ENCODE measurements at regions of chr10 and their contacts with region 1.

Region 1: DNA sequence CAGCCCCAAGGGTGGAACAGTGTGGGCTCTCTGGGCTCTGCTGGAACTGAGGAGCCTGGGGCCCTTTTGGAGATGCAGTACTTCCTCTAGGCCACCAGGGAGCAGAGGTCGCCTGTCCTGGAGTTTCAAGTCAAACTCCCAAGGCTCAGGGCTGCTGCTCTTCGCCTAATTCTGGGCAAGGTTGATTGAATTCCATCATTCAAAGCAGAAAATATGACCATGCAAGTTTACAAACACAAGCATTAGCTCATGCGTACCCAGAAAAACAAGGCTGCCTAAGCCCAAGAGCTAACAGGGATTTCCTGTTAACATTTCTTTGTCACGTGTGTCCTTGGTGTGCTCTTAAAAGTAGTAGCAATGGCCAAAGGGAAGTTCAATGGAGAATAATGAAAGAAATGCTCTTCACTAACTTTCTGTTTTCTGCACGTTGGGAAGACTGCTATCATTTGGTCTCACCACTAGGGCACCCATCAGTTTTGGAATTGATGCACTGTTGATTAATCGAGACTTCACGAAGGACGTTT is 20.1 kb downstream of the LDB3 start:
- DNase-seq: peak; percentile 50
- H3K4me3 ChIP-seq: no peak overlapping the region
- H3K27ac ChIP-seq: no peak overlapping the region
- H3K4me1 ChIP-seq: no peaks in the 10 kb centered on the region
- H3K27me3 ChIP-seq: no peaks in the 10 kb centered on the region
- CTCF ChIP-seq: peak; percentile 69 to 92

Region 2: GRCh38 chr10:86592413-86592812 is 96.0 kb before region 1 on chr10:
- CTCF ChIA-PET with region 1: no interaction called
- dilution Hi-C with region 1: loop called (anchors 5 kb)
- in situ Hi-C with region 1: no loop called
- intact Hi-C with region 1: loop called (anchors 1 kb)
- DNase-seq: peak; percentile 67
- H3K4me3 ChIP-seq: no peak overlapping the region
- H3K27ac ChIP-seq: no peak overlapping the region
- H3K4me1 ChIP-seq: no peaks in the 10 kb centered on the region
- H3K27me3 ChIP-seq: no peaks in the 10 kb centered on the region
- CTCF ChIP-seq: peak in 1 of 2 donors; percentile 35

Region 3: DNA sequence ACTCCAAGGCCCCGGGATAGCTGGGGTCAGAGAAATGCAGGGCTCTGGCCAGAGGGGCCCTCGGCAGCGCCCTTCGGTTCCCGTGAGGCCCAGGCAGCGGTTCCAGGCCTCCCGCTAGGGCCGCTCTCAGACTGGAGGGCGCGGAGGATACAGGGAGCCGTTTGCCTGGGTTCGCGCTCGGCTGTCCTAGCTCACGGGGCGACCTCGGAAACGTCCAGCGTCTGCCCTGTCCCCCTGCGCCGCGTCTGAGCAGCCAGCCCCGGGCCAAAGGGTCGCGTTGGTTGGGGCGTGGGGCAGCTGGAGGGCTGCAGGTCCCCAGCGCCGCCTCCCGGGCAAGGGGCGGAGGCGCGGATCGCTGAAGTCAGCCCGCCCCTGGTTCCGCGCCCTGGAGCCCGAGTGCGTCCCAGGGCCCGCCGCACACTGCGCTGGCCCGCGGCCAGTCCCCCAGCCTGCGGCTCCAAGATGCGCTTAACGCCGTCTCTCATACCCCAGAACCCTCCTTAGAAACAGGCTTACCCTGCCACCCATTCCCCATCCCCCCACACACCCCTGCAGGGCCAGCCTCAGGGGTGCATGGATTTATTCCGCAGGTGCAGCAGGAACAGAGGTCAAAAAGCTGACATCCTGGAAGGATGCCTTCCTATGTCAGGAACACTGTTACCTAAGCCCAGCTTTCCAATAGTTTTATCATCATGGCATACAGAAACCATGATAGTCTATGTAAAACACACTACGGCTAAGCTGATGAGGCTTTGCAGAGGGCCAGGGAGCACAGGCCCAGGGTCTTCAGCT is 56.3 kb before region 1 on chr10:
- CTCF ChIA-PET with region 1: no interaction called
- dilution Hi-C with region 1: no loop called
- in situ Hi-C with region 1: no loop called
- intact Hi-C with region 1: no loop called
- DNase-seq: no peak
- H3K4me3 ChIP-seq: no peak overlapping the region
- H3K27ac ChIP-seq: no peak overlapping the region
- H3K4me1 ChIP-seq: peaks cover 7% of the 10 kb centered on the region
- H3K27me3 ChIP-seq: peaks cover 2% of the 10 kb centered on the region
- CTCF ChIP-seq: no peak

Region 4: DNA sequence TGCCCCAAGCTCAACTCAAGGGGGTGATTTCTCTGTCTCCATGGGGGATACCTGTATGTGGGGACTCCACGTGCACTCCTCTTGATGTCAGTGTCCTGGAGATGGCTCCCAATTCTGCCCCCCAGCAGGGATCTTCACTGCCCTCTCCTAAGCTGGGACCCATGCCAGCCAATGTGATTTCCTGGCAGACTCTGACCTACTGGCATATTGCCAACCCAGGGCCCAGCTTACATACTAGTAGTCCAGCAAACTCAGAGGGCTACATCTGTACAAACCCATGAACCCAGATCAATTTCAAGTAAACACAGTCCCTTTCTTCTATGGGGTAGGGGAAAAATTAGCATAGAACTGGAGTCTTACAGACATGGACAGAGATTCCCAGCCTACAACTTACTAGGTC is 41.8 kb after region 1 on chr10:
- CTCF ChIA-PET with region 1: no interaction called
- dilution Hi-C with region 1: no loop called
- in situ Hi-C with region 1: no loop called
- intact Hi-C with region 1: no loop called
- DNase-seq: no peak
- H3K4me3 ChIP-seq: no peak overlapping the region
- H3K27ac ChIP-seq: no peak overlapping the region
- H3K4me1 ChIP-seq: no peaks in the 10 kb centered on the region
- H3K27me3 ChIP-seq: no peaks in the 10 kb centered on the region
- CTCF ChIP-seq: no peak

Region 5: DNA sequence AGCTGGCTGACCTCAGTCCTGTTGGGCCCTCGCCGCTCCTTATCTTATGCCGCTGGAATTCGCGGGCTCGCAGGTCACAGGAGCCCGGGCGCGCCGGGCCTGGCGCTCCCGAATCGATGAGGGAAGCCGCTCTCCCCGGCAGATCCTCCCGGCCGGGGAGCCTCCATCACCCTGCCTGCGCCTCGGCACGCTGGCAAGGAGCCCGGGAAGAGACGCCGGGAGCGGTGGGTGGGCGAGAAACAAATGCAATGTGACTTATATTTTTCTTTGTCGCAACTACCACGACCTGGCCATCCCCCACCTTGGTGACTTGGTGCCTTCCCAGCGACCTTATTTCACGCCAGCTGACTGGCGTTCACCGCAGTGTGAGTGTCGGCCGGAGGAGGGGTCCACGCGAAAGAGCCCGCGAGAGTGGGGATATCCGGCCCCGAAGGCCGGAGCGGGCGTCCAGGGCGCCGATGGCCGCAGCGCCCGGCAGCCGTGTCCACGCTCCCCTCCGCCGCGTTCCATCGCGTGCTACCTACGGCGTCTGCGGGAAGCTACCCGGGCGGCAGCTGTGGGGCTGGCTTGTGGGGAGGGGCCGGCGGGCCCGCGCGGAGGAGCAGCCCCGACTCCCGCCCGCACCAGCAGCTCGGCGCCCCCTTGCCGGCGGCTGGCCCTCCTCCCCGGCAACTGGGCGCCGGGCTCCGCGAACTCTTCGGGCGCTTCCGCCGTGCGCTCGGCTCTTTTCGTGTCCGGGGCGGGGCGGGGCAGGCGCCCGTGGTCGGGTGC is 67.5 kb after region 1 on chr10:
- CTCF ChIA-PET with region 1: no interaction called
- dilution Hi-C with region 1: no loop called
- in situ Hi-C with region 1: no loop called
- intact Hi-C with region 1: loop called (anchors 2 kb)
- DNase-seq: peak; percentile 85
- H3K4me3 ChIP-seq: peak overlapping the region; percentile 63 to 69 (median 68)
- H3K27ac ChIP-seq: peak overlapping the region; percentile 87
- H3K4me1 ChIP-seq: peaks cover 18% of the 10 kb centered on the region
- H3K27me3 ChIP-seq: no peaks in the 10 kb centered on the region
- CTCF ChIP-seq: no peak

Region 6: DNA sequence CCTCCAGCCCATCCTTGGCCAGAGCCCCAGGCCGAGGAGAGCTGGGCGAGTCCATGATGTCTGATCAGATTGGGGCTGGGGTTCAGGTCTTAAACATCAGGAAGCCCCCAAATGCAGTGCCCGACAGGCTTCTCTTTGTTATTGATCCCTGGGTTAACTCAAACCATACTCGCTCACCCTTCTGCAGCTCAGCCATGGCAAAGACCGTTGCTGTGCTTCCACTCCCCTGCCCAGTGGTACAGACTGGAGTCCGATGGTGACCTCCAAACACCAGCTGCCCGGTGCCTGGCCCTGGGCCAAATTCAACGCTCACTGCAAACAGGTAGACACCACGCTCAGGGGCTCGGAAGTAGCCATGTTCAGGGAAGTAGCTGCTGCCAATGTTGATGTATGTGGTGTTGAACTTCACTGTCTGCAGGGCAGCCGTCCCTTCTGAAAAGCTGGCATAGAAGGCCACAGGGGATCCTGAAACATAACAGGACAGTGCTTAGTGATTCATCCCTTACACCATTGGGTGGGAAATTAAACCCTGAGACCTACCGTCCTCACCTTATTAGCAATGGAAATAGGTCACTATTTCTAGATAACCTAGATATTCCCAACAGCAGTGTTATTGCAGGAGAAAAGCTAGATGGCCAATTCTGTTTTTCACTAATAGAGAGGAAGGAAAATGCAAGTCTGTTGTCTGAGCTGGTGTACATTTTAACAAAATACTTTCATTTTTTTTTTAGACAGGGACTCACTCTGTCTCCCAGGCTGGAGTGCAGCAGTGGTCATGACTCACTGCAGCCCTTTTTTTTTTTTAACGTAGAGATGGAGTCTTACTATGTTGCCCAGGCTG is 248.4 kb after region 1 on chr10:
- CTCF ChIA-PET with region 1: no interaction called
- dilution Hi-C with region 1: no loop called
- in situ Hi-C with region 1: no loop called
- intact Hi-C with region 1: loop called (anchors 1 kb)
- DNase-seq: no peak
- H3K4me3 ChIP-seq: no peak overlapping the region
- H3K27ac ChIP-seq: no peak overlapping the region
- H3K4me1 ChIP-seq: peaks cover 8% of the 10 kb centered on the region
- H3K27me3 ChIP-seq: no peaks in the 10 kb centered on the region
- CTCF ChIP-seq: no peak

Region 7: DNA sequence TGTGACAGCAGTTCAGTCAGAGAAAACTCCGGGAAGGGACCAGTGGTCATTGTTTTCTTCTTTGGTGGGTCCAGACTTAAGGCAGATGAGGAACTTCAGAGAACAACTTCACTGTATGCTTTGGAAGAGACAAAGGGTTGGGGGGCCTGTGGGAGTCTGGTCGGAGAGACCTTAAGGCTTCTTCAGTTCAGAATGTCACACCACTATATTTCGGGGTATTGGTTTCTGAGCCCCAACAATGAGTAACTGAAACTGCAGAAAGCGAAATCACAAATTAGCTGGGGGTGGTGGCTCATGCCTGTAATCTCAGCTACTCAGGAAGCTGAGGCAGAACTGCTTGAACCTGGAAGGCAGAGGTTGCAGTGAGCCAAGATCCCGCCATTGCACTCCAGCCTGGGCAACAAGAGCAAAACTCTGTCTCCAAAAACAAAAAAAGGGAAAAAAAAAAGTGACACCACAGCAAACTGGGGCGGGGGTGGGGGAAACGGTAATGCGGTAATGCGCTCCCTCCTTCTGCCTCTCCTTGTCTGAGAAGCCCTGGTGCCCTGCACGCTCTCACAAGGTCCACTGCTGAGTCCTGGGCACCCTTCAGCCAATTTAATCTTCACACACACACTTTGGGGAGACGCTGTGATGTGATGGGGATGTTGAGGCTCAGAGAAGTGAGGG is 277.7 kb after region 1 on chr10:
- CTCF ChIA-PET with region 1: interaction called, 3 read pairs
- dilution Hi-C with region 1: no loop called
- in situ Hi-C with region 1: no loop called
- intact Hi-C with region 1: loop called (anchors 1 kb)
- DNase-seq: no peak
- H3K4me3 ChIP-seq: peak overlapping the region in 1 of 3 experiments; percentile 21
- H3K27ac ChIP-seq: peak overlapping the region; percentile 16
- H3K4me1 ChIP-seq: peaks cover 57% of the 10 kb centered on the region
- H3K27me3 ChIP-seq: no peaks in the 10 kb centered on the region
- CTCF ChIP-seq: no peak

Measured in mammary epithelial cell (primary cell).